ENCODE measurements at regions of chr7 and their contacts with region 1.

Region 1: DNA sequence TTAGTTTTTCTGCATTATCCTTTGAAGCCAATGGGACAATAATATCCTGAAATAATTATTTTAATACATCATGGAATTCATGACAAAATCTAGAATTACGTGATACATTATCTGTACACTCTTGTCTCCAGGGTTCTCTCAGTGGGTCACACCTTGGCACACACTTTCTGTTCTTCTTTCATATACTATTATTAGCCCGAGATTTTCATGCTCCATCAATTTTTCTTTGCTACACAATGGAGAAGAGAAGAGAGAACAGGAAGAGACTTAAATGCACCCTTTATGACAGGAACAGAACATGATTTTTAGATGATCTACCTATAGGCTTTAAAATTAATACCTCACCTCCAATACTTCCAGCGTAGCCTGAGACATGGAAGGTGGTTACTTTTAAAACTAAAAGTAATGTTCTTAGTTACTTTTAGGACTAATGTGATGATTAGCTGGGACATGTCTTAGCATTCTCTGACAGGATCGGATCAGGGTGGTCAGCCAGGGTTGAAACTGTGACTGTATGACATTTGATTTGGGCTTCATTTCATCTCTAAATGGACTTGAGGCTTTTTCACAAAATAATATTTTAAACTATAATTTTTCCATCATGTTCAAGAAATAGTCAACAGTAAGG is 148.2 kb upstream of the WNT16 start:
- DNase-seq: no peak
- ATAC-seq: peak; percentile 52 to 69 (median 53)
- H3K4me3 ChIP-seq: no peak overlapping the region
- H3K27ac ChIP-seq: peak overlapping the region in 2 of 12 donors; percentile 11 to 16
- H3K4me1 ChIP-seq: peaks cover 0 to 35% (median 0%) of the 10 kb centered on the region in 12 donors
- H3K27me3 ChIP-seq: no peaks in the 10 kb centered on the region
- CTCF ChIP-seq: no peak
- POLR2A ChIP-seq: no peak

Region 2: DNA sequence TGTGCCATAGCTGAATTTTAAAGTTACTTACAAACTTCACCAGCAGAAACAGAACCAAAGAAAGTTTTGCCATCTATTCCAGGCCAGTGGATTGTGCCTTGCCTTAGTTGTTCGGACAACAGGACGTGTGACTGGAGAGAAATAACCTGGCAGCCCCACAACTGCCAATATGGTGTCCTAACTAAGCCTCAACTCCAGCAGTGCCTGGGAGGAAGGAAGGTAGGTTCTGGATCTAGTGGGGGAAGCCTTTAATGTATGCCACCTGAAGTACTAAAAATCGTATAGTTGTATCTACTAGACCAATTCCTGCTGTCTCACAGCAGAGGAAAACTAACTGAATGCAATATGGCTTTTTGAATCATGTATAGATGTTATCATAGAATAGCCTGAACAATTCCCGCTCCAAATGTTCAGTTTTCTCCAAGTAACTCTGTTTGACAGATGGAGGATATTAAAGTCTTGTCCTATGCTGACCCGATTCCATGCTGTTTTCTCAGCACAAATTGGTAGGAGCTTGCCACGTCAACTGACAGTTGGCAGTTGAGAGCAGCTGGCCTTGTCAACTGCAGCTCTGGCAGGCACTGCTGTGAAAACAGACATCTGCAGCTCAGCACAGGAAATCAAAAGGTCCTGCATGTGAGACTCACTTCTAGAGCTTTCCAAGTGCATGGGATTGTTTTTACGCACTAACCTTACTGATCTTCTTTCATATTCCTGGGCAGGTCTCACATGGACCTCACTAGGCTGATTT is 63.7 kb after region 1 on chr7:
- intact Hi-C with region 1: loop called in 1 of 10 experiments (anchors 10 kb)
- DNase-seq: peak in 2 of 5 donors; percentile 6 to 23
- ATAC-seq: peak in 2 of 4 donors; percentile 43 to 82
- H3K4me3 ChIP-seq: no peak overlapping the region
- H3K27ac ChIP-seq: no peak overlapping the region
- H3K4me1 ChIP-seq: no peaks in the 10 kb centered on the region
- H3K27me3 ChIP-seq: no peaks in the 10 kb centered on the region
- CTCF ChIP-seq: no peak
- POLR2A ChIP-seq: no peak